AG04449 (cell line): ENCODE measurements at regions of chr1 and their contacts with region 1.

Region 1: DNA sequence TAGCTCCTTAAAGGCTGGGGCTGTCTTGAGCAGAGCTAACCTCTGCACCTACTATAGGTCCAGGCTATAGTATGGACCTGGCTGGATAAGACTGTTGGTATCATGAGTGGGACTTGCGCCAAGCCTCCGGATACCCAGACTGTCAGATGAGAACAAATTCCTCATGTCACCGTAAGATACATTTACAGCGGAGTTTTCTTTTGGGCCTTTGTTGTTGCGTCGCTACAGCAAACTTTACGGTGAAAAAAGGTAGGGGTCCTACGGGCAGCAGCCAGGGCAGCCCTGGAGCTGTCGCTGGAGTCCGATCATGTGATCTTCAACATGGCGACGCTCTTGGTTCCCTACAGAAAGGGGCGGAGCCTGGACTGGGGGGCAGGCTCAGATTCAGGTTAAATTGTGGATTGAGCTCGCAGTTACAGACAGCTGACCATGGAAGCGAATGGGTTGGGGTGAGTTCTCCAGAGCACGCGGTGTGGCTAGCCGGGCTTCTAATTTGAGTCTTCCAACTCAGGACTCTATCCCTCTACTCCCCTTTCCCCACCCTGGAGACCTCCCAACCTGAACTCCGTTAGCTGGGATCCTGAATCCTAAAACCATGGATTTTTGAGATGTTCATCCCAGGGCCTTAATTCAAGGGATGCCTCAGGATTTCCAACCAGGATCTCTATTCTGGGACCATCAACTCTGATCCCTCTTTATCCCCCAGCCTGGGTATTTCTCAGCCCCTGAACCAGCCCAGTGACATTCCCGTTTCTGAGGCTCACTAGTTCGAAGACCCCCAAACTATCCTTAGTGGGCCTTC is at the start of gene UROD:
- DNase-seq: peak; percentile 75
- H3K4me3 ChIP-seq: peak within 1 kb of the TSS; percentile 84
- CTCF ChIP-seq: no peak

Region 2: DNA sequence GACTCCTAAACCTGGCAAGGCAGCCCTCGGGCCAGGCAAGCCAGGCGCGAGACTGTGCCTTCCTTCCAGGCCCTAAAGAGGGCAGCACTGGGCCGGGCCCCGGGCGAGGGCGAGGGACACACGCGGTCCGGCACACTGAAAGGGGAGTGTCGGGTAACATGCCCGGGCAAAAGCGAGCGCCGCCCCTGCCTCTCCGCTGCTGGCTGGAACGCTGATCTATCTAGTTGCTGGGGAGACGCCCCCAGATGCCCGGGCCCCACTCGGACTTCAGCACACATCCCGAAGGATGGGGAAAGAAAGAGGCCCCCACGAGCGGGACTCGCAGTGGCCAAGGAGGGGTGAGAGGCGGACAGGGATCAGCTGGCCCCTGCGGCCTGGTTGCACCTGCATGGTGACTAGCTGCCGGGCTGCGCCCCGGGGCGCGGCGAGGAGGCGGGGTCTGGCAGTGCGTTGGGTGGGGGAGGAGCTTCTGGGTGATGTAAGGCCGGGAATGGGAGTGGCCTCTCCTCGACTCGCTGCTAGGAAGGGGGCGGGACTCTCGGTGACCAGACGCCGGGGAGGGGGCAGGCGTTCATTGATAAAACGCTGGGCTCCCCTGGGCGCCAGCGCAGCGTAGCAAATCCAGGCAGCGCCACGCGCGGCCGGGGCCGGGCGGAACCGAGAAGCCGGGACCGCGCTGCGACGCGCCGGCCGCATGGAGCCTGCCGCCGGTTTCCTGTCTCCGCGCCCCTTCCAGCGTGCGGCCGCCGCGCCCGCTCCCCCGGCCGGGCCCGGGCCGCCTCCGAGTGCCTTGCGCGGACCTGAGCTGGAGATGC is 212.1 kb before region 1 on chr1 and contains the start of gene PLK3:
- CTCF ChIA-PET with region 1: interaction called, 5 read pairs
- POLR2A ChIA-PET with region 1: interaction called, 13 read pairs
- DNase-seq: peak; percentile 85
- H3K4me3 ChIP-seq: peak within 1 kb of the TSS; percentile 86
- CTCF ChIP-seq: peak; percentile 96

Region 3: DNA sequence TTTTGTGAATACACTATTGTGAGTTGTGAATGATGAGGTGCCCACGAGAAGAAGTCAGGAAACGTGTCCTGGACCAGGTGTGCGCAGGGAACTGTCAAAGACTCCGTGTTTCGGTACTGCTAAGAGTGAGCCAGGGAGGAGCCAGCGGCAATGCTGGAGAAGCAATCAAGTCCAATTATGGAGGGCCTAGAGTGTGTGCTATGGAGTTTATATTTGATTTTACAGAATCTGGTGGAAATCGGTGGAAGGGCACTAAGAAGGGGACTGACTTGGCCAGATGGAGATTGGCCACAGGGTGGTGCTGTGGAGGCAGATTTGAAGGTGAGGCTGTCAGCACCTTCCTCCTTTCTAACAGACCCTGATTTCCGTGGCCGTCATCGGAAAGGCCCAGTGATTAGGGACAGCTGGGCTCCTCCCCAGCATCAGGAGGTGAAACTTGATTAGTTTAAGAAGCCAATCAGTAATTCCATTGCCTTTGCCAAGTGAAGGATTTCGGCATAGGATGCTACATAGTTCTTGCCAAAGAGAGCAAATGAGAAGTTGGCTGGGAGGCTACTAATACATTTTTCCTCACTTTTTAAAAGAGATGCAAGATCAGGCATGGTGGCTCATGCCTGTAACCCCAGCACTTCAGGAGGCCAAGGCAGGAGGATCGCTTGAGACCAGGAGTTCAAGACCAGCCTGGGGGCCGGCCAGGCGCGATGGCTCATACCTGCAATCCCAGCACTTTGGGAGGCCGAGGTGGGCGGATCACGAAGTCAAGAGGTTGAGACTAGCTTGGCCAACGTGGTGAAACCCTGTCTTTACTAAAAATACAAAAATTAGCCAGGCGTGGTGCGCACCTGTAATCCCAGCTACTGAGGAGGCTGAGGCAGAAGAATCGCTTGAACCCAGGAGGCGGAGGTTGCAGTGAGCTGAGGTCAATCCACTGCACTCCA is 176.0 kb before region 1 on chr1:
- CTCF ChIA-PET with region 1: interaction called, 92 read pairs
- POLR2A ChIA-PET with region 1: interaction called, 3 read pairs
- DNase-seq: no peak
- H3K4me3 ChIP-seq: no peak overlapping the region
- CTCF ChIP-seq: peak; percentile 87

Region 4: GRCh38 chr1:44970317-44970716 is 41.7 kb before region 1 on chr1:
- CTCF ChIA-PET with region 1: no interaction called
- POLR2A ChIA-PET with region 1: no interaction called
- DNase-seq: no peak
- H3K4me3 ChIP-seq: no peak overlapping the region
- CTCF ChIP-seq: no peak

Region 5: DNA sequence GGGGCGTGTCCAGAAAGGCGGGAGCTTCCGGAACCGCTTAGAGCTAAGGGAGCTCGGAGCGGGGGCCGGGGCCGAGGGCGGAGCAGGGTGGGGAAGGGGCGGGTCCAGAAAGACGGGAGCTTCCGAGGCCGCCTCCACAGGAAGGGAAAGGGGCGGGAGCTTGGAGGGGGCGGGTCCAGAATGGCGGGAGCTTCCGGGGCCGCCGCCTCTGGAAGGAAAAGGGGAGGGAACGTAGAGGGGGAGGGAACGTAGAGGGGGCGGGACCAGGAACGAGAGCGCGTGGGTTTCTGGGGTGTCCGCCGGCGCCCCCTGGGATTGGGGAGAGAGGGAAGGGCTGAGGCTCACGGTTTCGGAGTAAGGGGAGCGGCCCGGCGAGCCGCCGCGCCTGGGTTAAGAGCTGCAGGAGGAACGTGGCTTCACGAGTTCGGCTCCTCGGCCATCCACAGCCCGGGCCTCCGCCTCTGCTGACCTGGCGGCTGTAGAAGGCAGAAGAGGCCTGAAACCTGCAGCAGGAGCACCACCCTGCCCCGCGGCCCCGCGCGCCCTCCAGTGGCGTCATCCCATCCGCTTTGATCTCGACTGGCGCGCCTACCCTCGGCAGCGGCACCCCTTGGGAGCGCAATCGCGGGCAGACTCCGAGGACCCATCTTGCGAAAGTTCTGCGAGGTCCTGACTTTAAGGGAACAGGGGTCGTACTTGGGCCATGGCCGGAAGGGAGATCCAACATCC is 291.7 kb after region 1 on chr1:
- CTCF ChIA-PET with region 1: interaction called, 950 read pairs
- POLR2A ChIA-PET with region 1: interaction called, 20 read pairs
- DNase-seq: peak; percentile 82
- H3K4me3 ChIP-seq: peak overlapping the region; percentile 79
- CTCF ChIP-seq: peak; percentile 82

Region 6: DNA sequence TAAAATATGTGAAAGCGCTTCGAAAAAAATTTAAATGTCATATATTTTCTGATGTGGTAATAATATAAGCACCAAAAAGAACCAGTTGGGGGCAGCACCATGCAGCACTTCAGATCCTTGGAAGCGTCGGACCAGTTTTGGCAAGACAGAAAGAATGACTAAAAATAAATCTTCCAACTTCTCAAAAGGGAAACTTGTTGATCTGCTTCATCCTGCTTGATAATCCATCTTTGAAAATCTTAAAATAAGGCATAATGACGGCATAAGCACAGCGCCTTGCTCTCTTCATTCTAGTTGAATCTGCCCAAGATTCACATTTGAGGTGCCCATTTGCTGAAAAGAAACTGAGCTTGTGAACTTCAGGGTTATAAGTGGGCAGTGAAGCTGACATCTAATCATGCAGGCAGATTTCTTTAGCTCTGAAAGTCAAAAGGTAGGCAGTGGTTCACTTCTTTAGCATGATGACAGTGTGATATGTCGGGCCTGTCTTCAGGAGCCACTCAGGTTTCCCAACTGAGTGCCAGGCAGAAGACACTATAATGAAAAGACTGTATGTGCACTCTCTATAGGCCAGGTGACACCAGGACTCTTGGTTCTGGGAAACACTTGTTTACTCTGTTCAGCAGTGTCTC is 348.0 kb after region 1 on chr1:
- CTCF ChIA-PET with region 1: interaction called, 31 read pairs
- POLR2A ChIA-PET with region 1: no interaction called
- DNase-seq: no peak
- H3K4me3 ChIP-seq: no peak overlapping the region
- CTCF ChIP-seq: peak; percentile 49